GM12878 (cell line): ENCODE measurements at regions of chr10 and their contacts with region 1.

Region 1: GRCh38 chr10:72764151-72764550 is 72.2 kb downstream of the MCU start:
- DNase-seq: no peak
- ATAC-seq: no peak
- H3K4me3 ChIP-seq: no peak overlapping the region
- H3K27ac ChIP-seq: no peak overlapping the region
- H3K4me1 ChIP-seq: no peaks in the 10 kb centered on the region
- H3K27me3 ChIP-seq: no peaks in the 10 kb centered on the region
- CTCF ChIP-seq: no peak
- EP300 ChIP-seq: no peak
- POLR2A ChIP-seq: no peak
- RAD21 ChIP-seq: no peak

Region 2: DNA sequence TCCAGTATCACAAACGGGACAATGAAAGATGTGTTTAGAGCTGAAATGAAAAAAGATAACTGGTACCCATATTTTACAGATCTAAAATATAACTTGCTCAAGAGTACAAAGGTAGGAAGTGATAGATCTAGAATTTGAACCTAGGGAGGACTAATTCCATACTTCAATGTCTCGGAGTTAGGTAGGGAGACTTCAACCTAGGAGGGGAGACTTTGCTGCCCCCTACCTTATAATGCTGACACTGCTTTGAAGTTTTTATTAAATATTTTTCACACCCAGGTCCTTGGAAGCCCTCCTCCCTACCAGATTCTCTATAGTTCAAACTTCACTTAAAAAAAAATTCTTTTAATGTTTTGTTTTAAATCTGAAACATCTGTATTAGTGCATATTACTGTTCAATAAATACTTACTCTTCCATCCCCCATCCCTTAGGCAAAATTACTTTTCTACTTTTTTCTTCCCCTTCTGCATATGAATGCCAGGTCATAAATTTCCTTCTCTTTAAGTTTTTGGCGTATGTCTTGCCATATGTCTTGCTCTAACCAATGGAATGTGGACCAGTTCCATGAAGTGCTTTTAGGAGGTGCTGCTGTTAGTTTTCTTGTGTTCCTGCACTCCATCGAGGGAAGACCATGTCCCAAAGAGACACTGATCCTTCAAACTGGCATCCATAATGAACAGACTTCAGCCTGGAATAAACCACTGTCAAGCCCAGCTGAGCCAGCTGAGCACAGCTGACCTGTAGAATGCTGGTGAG is 196.1 kb before region 1 on chr10:
- CTCF ChIA-PET with region 1: no interaction called
- POLR2A ChIA-PET with region 1: no interaction called
- RAD21 ChIA-PET with region 1: no interaction called
- SMC1A ChIA-PET with region 1: no interaction called
- in situ Hi-C with region 1: no loop called
- intact Hi-C with region 1: no loop called
- DNase-seq: no peak
- ATAC-seq: peak; percentile 52; the same call in 2 of the 3 replicates
- H3K4me3 ChIP-seq: no peak overlapping the region
- H3K27ac ChIP-seq: no peak overlapping the region
- H3K4me1 ChIP-seq: peaks cover 4% of the 10 kb centered on the region; the same call in 1 of the 2 replicates
- H3K27me3 ChIP-seq: no peaks in the 10 kb centered on the region
- CTCF ChIP-seq: peak; percentile 41 to 57 (median 51)
- EP300 ChIP-seq: no peak
- POLR2A ChIP-seq: no peak
- RAD21 ChIP-seq: peak; percentile 63

Region 3: DNA sequence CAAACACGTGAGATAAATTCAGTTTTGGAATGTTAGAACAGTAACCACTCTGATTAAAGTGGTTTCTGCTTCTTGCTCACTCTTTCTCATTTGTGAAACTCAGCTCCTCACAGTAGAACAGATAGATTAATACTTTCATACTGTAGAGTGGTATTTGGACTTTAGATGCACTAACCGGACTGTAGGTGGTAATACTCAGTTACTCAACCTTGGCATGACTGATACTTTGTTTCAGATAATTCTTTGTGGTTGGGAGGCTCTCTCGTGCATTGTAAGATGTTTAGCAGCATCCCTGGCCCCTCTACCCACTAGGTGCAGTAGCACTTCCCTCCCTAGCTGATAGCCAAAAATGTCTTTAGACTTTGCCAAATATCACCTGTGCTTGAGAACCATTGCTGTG is 34.6 kb before region 1 on chr10:
- CTCF ChIA-PET with region 1: no interaction called
- POLR2A ChIA-PET with region 1: interaction called, 10 read pairs
- RAD21 ChIA-PET with region 1: no interaction called
- SMC1A ChIA-PET with region 1: no interaction called
- in situ Hi-C with region 1: no loop called
- intact Hi-C with region 1: no loop called
- DNase-seq: peak; percentile 51
- ATAC-seq: peak; percentile 99
- H3K4me3 ChIP-seq: no peak overlapping the region
- H3K27ac ChIP-seq: no peak overlapping the region
- H3K4me1 ChIP-seq: peaks cover 6% of the 10 kb centered on the region; the same call in 1 of the 2 replicates
- H3K27me3 ChIP-seq: no peaks in the 10 kb centered on the region
- CTCF ChIP-seq: no peak
- EP300 ChIP-seq: no peak
- POLR2A ChIP-seq: no peak
- RAD21 ChIP-seq: no peak